ENCODE measurements at regions of chr7 and their contacts with region 1.

Region 1: DNA sequence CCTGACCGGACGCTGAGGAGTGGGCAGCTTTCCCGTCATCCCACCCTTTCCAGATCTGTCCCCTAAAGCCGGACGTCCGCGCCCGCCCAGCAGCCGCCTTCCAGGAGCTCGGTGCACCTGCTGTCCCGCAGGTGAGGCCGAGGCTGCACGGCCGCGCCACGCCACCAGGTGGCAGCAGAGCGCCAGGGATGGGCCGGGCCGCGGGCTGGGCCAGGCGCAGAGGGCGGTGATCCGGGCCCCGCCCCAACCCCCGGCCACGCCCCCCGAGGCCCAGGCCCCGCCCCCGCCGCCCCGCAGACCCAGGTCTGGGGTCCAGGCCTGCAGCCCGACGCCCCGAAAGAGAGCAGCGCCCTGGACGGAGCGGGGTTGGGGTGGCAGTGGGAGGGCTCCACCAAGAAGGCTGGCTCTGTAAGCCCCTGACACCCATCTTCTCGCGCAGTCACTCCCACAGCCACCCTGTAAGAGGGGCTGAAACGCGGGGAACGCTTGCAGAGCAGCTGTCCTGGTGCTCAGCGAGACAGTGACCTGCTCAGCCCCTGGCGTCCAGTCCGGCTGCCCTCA is 32.2 kb downstream of the FOXL3 start:
- DNase-seq: peak in 5 of 6 donors; percentile 79 to 100 (median 95)
- ATAC-seq: peak; percentile 75 to 84 (median 80)
- H3K4me3 ChIP-seq: no peak overlapping the region
- H3K27ac ChIP-seq: peak overlapping the region in 3 of 4 donors; percentile 50 to 81 (median 81)
- H3K4me1 ChIP-seq: peaks cover 32 to 50% (median 36%) of the 10 kb centered on the region in 3 donors
- H3K27me3 ChIP-seq: no peaks in the 10 kb centered on the region
- CTCF ChIP-seq: peak; percentile 88 to 94 (median 94)

Region 2: GRCh38 chr7:636396-636795 is 314.2 kb after region 1 on chr7:
- intact Hi-C with region 1: loop called in 1 of 3 experiments (anchors 5 kb)
- DNase-seq: peak in 5 of 6 donors; percentile 20 to 80 (median 57)
- ATAC-seq: peak; percentile 43 to 90 (median 75)
- H3K4me3 ChIP-seq: no peak overlapping the region
- H3K27ac ChIP-seq: no peak overlapping the region
- H3K4me1 ChIP-seq: no peaks in the 10 kb centered on the region
- H3K27me3 ChIP-seq: no peaks in the 10 kb centered on the region
- CTCF ChIP-seq: peak in 3 of 4 donors; percentile 10 to 31 (median 19)

Region 3: GRCh38 chr7:774161-775109 is 452.2 kb after region 1 on chr7:
- intact Hi-C with region 1: loop called in 2 of 3 experiments (anchors 5 kb)
- DNase-seq: peak in 5 of 6 donors; percentile 42 to 89 (median 69)
- ATAC-seq: peak in 3 of 4 donors; percentile 55 to 63 (median 63)
- H3K4me3 ChIP-seq: no peak overlapping the region
- H3K27ac ChIP-seq: no peak overlapping the region
- H3K4me1 ChIP-seq: peaks cover 20 to 23% (median 21%) of the 10 kb centered on the region in 3 donors
- H3K27me3 ChIP-seq: no peaks in the 10 kb centered on the region
- CTCF ChIP-seq: peak; percentile 68 to 87 (median 70)

Region 4: GRCh38 chr7:867672-868486 is 545.7 kb after region 1 on chr7:
- intact Hi-C with region 1: loop called in 2 of 3 experiments (anchors 10 kb)
- DNase-seq: peak in 2 of 6 donors; percentile 37 to 64
- ATAC-seq: peak in 3 of 4 donors; percentile 52 to 65 (median 65)
- H3K4me3 ChIP-seq: no peak overlapping the region
- H3K27ac ChIP-seq: peak overlapping the region in 3 of 4 donors; percentile 5 to 46 (median 41)
- H3K4me1 ChIP-seq: no peaks in the 10 kb centered on the region
- H3K27me3 ChIP-seq: no peaks in the 10 kb centered on the region
- CTCF ChIP-seq: no peak